Sigmoid colon (tissue), 7 donors: ENCODE measurements at regions of chr6 and their contacts with region 1.

Region 1: DNA sequence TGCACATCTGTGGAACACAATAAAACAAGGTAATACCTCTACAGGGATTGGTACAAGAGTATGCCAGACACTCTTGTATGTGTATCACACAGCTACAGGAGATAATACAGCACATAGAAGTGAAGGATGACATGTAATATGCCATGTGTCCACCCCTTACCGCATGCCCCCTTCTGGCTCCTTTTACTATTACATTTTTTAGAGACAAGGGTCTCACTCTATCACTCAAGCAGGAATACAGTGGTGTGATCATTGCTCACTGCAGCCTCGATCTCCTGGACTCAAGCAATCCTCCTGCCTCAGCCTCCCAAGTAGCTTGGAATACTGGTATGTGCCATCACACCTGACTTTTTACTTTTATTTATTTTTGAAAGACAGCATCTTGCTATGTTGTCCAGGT is 4.2 kb upstream of the NCR3 start:
- DNase-seq: no peak
- H3K4me3 ChIP-seq: no peak overlapping the region
- H3K27ac ChIP-seq: no peak overlapping the region
- H3K4me1 ChIP-seq: no peaks in the 10 kb centered on the region
- H3K27me3 ChIP-seq: no peaks in the 10 kb centered on the region
- CTCF ChIP-seq: peak in 3 of 4 experiments; percentile 6 to 21 (median 8)
- EP300 ChIP-seq: no peak
- POLR2A ChIP-seq: no peak

Region 2: GRCh38 chr6:31493875-31494694 is 102.9 kb before region 1 on chr6:
- intact Hi-C with region 1: loop called (anchors 2 kb)
- DNase-seq: peak; percentile 84
- H3K4me3 ChIP-seq: peak overlapping the region; percentile 27 to 52 (median 44)
- H3K27ac ChIP-seq: peak overlapping the region; percentile 37 to 76 (median 62)
- H3K4me1 ChIP-seq: peaks cover 0 to 33% (median 25%) of the 10 kb centered on the region in 4 donors
- H3K27me3 ChIP-seq: peaks cover 16 to 67% (median 37%) of the 10 kb centered on the region in 3 donors
- CTCF ChIP-seq: peak; percentile 61 to 76 (median 65)
- EP300 ChIP-seq: no peak
- POLR2A ChIP-seq: no peak

Region 3: DNA sequence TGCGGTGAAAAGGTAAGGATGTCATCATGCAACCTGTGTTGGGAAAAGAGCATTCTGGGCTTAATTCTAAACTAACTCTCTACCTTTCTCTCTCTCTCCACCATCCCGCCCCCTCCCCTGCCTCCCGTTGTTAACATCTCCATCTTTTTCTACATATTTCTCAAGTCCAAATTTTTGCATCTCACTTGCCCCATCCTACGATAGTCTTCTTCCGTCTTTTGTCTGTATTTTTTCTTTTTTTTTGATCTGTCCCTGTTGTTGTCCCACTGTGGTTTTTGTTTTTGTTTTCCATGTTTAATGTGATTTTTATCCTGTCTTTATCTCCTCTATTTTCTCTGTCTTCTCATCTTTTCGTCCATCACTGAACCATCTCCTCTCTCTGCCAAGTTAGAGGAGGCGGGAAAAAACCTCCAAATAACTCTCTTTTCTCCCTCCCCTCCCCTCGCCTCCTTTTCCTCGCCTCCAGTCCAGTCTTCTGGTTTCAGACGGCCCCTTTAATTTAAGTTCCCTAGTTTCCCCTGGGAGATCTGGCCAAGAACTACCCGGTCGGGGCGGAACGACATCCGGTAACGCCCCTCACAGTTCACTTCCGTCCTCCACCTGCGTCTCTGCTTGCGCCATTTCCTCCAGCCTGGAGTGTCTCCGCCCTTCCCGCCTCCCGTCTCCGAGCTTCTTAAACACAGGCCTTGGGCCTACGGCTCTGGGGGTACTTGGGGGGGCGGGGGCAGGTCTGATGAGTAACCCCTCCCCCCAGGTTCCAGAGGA is 49.9 kb before region 1 on chr6 and contains the start of gene NFKBIL1:
- intact Hi-C with region 1: loop called (anchors 1 kb)
- DNase-seq: peak; percentile 99
- H3K4me3 ChIP-seq: peak within 1 kb of the TSS; percentile 40 to 51 (median 46)
- H3K27ac ChIP-seq: peak within 1 kb of the TSS; percentile 85 to 88 (median 86)
- H3K4me1 ChIP-seq: peaks cover 0 to 30% (median 23%) of the 10 kb centered on the region in 4 donors
- H3K27me3 ChIP-seq: no peaks in the 10 kb centered on the region
- CTCF ChIP-seq: peak in 1 of 4 experiments; percentile 32
- EP300 ChIP-seq: peak in 1 of 4 donors; percentile 83
- POLR2A ChIP-seq: peak in 1 of 2 donors; percentile 44
- total RNA-seq, gene NFKBIL1: 32.5 to 55.1 (median 36.3) TPM

Region 4: GRCh38 chr6:31558631-31559500 is 38.1 kb before region 1 on chr6:
- intact Hi-C with region 1: loop called (anchors 1 kb)
- DNase-seq: peak; percentile 69
- H3K4me3 ChIP-seq: no peak overlapping the region
- H3K27ac ChIP-seq: peak overlapping the region in 3 of 4 donors; percentile 40 to 55 (median 54)
- H3K4me1 ChIP-seq: peaks cover 0 to 20% (median 5%) of the 10 kb centered on the region in 4 donors
- H3K27me3 ChIP-seq: no peaks in the 10 kb centered on the region
- CTCF ChIP-seq: no peak
- EP300 ChIP-seq: no peak
- POLR2A ChIP-seq: no peak

Region 5: DNA sequence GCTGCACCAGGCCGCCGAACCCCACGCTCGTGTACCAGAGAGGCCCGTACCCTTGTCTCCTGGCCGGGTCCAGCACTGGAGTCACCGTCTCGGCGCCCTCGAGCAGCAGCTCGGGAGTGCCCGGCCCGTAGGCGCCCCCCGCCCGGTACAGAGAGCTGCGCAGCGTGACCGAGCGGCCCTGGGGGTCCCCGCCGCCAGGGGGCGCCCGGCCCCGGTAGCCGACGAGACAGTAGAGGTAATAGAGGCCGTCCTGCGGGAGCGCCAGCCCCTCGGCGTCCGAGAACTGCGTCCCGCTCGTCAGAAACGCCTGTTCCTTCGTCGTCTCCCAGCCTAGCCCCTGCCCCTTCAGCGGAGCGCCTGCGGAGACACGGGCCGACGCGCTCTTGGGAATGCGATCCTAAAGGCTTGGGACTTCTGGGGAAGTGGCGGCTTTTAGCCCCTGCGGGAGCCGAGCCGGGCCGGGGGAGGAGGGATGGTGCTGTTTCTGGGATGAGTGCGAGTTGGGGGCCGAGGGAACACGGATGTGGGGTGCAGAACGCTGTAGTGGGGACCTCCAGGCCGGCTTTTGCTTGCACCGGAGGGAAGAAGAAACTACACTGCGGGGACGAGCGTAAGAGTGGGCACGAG is 16.1 kb before region 1 on chr6:
- intact Hi-C with region 1: loop called (anchors 1 kb)
- DNase-seq: peak; percentile 94
- H3K4me3 ChIP-seq: peak overlapping the region; percentile 50 to 85 (median 70)
- H3K27ac ChIP-seq: peak overlapping the region; percentile 80 to 87 (median 84)
- H3K4me1 ChIP-seq: peaks cover 0 to 21% (median 17%) of the 10 kb centered on the region in 4 donors
- H3K27me3 ChIP-seq: no peaks in the 10 kb centered on the region
- CTCF ChIP-seq: peak; percentile 86 to 96 (median 90)
- EP300 ChIP-seq: no peak
- POLR2A ChIP-seq: peak in 1 of 2 donors; percentile 33